Psoas muscle (tissue), 8 donors: ENCODE measurements at regions of chr16 and their contacts with region 1.

Region 1: GRCh38 chr16:64667334-64667877 is 454.5 kb downstream of the CDH11 start:
- DNase-seq: no peak
- ATAC-seq: no peak
- H3K4me3 ChIP-seq: no peak overlapping the region
- H3K27ac ChIP-seq: no peak overlapping the region
- H3K4me1 ChIP-seq: no peaks in the 10 kb centered on the region
- H3K27me3 ChIP-seq: no peaks in the 10 kb centered on the region
- CTCF ChIP-seq: no peak

Region 2: GRCh38 chr16:64724339-64724738 is 56.9 kb after region 1 on chr16:
- intact Hi-C with region 1: loop called in 1 of 2 experiments (anchors 5 kb)
- DNase-seq: no peak
- ATAC-seq: no peak
- H3K4me3 ChIP-seq: no peak overlapping the region
- H3K27ac ChIP-seq: no peak overlapping the region
- H3K4me1 ChIP-seq: no peaks in the 10 kb centered on the region
- H3K27me3 ChIP-seq: no peaks in the 10 kb centered on the region
- CTCF ChIP-seq: no peak